Naive thymus-derived CD4-positive, alpha-beta T cell (primary cell): ENCODE measurements at regions of chr12 and their contacts with region 1.

Region 1: GRCh38 chr12:31797230-31797872 is 68.5 kb upstream of the AMN1 start:
- DNase-seq: peak in 6 of 9 donors; percentile 7 to 24 (median 19)
- ATAC-seq: peak; percentile 27
- H3K4me3 ChIP-seq: no peak overlapping the region
- H3K4me3 Mint-ChIP-seq: peak overlapping the region; percentile 8 to 76 (median 71)
- H3K27ac ChIP-seq: peak overlapping the region; percentile 39
- H3K27ac Mint-ChIP-seq: peak overlapping the region; percentile 30 to 93 (median 89)
- H3K4me1 ChIP-seq: peaks cover 0 to 25% of the 10 kb centered on the region in 2 donors
- H3K4me1 Mint-ChIP-seq: peaks cover 16 to 51% (median 46%) of the 10 kb centered on the region in 7 donors
- H3K27me3 ChIP-seq: no peaks in the 10 kb centered on the region
- H3K27me3 Mint-ChIP-seq: no peaks in the 10 kb centered on the region

Region 2: DNA sequence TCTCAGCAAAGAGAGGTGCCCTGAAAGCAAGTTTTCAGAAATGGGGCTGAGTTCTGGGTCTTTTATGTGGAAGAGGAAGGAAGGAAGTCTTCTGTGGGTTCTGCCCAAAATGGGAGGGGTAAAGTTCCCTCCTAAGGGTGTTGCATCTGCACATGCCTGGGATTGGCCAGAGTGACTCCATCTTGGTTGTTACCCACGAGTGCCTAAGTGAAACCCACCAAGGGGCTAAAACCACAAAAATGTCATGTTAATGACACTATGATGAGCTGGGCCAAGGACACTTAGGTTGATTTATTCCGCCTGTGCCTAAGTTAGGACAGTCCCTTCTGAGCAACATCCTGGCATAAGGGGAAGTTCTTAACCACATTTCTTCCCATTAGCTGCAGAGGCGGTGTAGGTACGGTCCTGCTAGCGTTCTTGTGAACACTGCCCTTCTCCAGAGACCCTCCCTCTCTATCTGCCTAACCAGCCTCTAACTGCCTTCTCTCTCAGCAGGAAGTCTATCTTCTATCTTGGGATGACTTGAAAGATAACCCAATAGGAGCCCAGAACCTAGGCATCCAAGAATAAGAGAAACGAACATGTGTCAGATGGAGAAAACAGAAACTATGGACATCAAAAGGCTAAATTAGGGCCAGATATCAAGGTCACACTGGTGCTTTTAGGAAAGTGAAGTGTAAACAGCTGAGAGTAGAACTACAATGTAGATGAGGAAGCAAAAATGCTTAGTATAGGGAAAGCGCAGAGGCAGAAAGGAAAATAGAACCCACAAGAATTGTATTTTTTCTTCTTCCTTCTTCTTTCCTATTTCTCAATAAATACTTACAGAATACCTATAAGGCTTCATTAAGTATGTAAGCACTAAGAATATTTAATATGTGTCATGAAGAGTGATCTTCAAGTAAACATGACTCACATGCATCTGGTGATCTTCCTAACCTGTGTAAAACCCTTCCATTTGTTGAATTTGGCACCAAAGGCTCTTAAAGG is 35.7 kb after region 1 on chr12:
- CTCF ChIA-PET with region 1: no interaction called
- POLR2A ChIA-PET with region 1: no interaction called
- intact Hi-C with region 1: loop called in 1 of 2 experiments (anchors 5 kb)
- DNase-seq: peak in 8 of 9 donors; percentile 8 to 73 (median 60)
- ATAC-seq: peak; percentile 86
- H3K4me3 ChIP-seq: peak overlapping the region; percentile 25
- H3K4me3 Mint-ChIP-seq: peak overlapping the region; percentile 51 to 87 (median 68)
- H3K27ac ChIP-seq: peak overlapping the region; percentile 37
- H3K27ac Mint-ChIP-seq: peak overlapping the region; percentile 14 to 88 (median 73)
- H3K4me1 ChIP-seq: peaks cover 27 to 29% of the 10 kb centered on the region in 2 donors
- H3K4me1 Mint-ChIP-seq: peaks cover 23 to 65% (median 56%) of the 10 kb centered on the region in 7 donors
- H3K27me3 ChIP-seq: no peaks in the 10 kb centered on the region
- H3K27me3 Mint-ChIP-seq: no peaks in the 10 kb centered on the region